ENCODE measurements at regions of chr19 and their contacts with region 1.

Region 1: DNA sequence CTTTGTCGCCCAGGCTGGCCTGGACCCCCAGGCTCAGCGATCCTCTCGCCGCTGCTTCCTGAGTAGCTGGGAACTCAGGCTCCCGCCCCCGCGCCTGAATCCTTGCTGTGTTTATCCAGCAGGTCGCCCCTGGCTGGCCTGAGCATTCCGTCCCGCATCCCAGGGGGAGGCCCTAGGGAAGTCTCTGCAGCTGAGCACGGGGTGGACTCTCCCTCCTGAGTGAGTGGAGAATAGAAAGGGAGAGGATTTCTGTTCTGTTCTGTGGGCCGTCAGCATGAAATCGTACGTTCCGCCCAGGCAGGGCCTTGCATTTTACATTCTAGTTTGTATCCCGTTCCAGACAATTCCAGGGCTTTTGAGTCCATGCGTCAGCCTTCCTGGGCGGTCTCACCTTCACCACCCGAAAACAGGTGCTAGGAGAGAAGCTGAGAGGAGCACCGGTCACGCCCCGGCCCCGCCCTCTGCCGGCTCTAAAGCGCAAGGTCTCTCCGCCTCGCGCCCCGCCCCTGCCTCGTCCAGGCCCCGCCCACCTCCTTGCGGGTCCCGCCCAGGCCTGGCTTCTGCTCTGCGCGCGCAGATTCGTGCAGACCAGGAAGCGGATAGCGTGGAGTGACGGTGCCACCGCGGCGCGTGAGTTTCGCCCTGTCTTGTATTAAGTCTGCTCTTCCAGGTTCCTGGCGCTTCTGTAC is at the start of gene ZNF761:
- DNase-seq: peak; percentile 93 to 98 (median 95)
- ATAC-seq: peak; percentile 99 to 100 (median 100)
- H3K4me3 ChIP-seq: peak within 1 kb of the TSS; percentile 54 to 95 (median 83)
- H3K27ac ChIP-seq: peak within 1 kb of the TSS in 11 of 12 donors; percentile 54 to 84 (median 66)
- H3K4me1 ChIP-seq: peaks cover 0 to 14% (median 6%) of the 10 kb centered on the region in 12 donors
- H3K27me3 ChIP-seq: no peaks in the 10 kb centered on the region
- CTCF ChIP-seq: peak in 10 of 12 donors; percentile 37 to 68 (median 54)
- POLR2A ChIP-seq: peak in 1 of 2 donors; percentile 75
- total RNA-seq, gene ZNF761: 2.6 to 5.5 (median 3.8) TPM

Region 2: DNA sequence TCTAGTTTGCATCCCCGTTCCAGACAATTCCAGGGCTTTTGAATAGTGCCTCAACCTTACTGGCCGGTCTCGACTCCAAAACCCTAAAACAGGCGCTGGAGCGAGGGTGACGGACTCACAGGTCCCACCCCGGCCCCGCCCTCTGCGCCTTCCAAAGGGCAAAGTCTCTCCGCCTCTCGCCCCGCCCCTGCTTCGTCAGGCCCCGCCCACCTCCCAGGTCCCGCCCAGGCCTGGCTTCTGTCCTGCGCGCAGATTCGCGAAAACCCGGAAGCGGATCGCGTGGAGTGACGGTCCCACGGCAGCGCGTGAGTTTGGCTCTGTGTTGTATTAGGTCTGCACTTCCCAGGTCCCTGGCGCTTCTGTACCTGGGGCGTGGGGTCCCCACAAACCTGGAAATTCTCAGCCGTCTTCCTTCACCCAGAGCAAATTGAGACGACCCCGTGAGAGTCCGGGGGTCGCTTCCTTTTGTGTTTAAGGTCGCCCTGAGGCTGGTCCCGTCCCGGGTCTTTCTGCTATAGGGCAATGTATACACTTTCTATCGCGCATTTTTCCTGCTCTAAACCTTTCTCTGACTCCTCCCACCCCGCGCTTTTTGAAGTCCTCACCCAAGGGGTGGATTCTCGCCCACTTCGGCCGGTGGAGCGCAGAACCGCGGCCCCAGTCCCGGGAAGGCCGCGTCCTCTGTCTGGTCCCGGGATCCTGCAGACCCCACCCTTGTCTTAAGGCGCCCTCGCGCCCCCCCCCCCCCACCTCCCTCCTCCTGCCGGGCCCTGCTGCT is 36.1 kb after region 1 on chr19 and contains the start of gene ZNF813:
- intact Hi-C with region 1: loop called in 2 of 10 experiments (anchors 5 kb)
- DNase-seq: peak; percentile 94 to 98 (median 97)
- ATAC-seq: peak; percentile 98 to 99 (median 99)
- H3K4me3 ChIP-seq: peak within 1 kb of the TSS; percentile 51 to 96 (median 81)
- H3K27ac ChIP-seq: peak within 1 kb of the TSS in 11 of 12 donors; percentile 27 to 81 (median 71)
- H3K4me1 ChIP-seq: peaks cover 0 to 23% (median 10%) of the 10 kb centered on the region in 12 donors
- H3K27me3 ChIP-seq: peaks cover 0 to 20% (median 0%) of the 10 kb centered on the region in 9 donors
- CTCF ChIP-seq: no peak
- POLR2A ChIP-seq: peak in 1 of 2 donors; percentile 51
- total RNA-seq, gene ZNF813: 0.82 to 2.5 (median 1.2) TPM

Region 3: DNA sequence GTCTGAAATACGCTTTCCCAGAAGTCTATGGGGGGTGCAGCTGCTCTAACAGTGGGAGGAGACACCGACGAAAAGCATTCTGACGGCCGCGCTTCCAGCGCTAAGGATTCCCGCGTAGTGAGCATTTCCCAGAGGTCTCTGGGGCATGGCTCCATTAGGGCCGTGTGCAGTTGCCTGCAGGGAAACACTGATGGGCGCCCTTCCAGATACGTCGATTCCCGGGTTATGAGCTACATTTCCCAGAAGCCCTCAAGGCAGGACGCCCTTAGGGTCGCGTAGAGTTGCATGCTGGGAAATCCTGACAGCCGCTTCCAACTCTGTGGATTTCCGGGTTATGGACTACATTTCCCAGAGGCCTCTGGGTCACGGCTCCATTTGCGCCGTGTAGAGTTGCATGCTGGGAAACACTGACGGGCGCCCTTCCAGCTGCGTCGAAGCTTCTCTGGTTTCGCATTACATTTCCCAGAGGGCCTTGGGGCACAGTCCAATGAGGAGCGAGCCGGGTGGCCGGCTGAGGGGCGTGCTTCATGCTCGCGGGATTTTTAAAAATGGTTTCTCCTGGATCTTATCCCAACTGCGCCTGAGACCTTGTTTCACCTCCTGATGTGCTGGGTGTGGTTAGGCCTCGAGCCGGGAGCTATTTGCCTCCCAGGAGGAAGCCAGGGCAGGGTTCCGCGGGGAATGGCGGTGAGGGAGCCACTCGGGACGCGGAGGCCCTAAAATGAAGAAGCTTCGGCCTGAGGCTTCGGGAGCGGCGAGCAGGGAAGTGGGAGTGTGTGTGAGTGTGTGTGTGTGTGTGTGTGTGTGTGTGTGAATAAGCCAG is 89.2 kb after region 1 on chr19:
- intact Hi-C with region 1: loop called in 1 of 10 experiments (anchors 5 kb)
- DNase-seq: peak; percentile 97 to 99 (median 98)
- ATAC-seq: peak; percentile 98 to 99 (median 99)
- H3K4me3 ChIP-seq: peak overlapping the region; percentile 8 to 65 (median 58)
- H3K27ac ChIP-seq: peak overlapping the region; percentile 57 to 93 (median 86)
- H3K4me1 ChIP-seq: peaks cover 0 to 15% (median 10%) of the 10 kb centered on the region in 12 donors
- H3K27me3 ChIP-seq: no peaks in the 10 kb centered on the region
- CTCF ChIP-seq: no peak
- POLR2A ChIP-seq: peak in 1 of 2 donors; percentile 49